ENCODE measurements at regions of chr3 and their contacts with region 1.

Region 1: GRCh38 chr3:100210772-100211135 is 50.0 kb upstream of the TBC1D23 start:
- DNase-seq: no peak
- H3K4me3 Mint-ChIP-seq: no peak overlapping the region
- H3K27ac Mint-ChIP-seq: no peak overlapping the region
- H3K4me1 Mint-ChIP-seq: peaks cover 15% of the 10 kb centered on the region
- H3K27me3 Mint-ChIP-seq: no peaks in the 10 kb centered on the region

Region 2: DNA sequence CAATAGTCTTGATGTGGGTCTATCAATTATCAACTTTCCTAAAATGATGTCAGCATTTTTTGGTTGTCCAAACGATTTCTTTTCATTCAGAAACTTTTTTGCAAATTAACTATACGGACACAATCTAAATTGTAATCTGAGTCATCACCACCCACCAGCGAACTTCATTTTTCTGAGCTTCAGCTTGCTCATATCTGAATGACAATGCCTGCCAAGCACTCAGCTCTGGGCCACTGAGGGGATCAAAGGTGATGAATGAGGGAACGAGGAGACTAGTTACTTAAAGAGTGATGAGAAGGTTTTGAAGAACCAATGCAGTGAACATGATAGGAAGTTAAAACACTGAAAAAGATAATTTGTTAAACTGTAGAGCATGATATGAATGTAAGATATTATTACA is 35.2 kb after region 1 on chr3:
- CTCF ChIA-PET with region 1: no interaction called
- POLR2A ChIA-PET with region 1: no interaction called
- intact Hi-C with region 1: loop called (anchors 2 kb)
- DNase-seq: peak; percentile 58
- H3K4me3 Mint-ChIP-seq: no peak overlapping the region
- H3K27ac Mint-ChIP-seq: no peak overlapping the region
- H3K4me1 Mint-ChIP-seq: peaks cover 16% of the 10 kb centered on the region
- H3K27me3 Mint-ChIP-seq: no peaks in the 10 kb centered on the region

Region 3: GRCh38 chr3:100260685-100261484 is 50.1 kb after region 1 on chr3 and contains the start of gene TBC1D23:
- CTCF ChIA-PET with region 1: no interaction called
- POLR2A ChIA-PET with region 1: no interaction called
- intact Hi-C with region 1: no loop called
- DNase-seq: peak; percentile 99
- H3K4me3 Mint-ChIP-seq: peak within 1 kb of the TSS; percentile 92
- H3K27ac Mint-ChIP-seq: peak within 1 kb of the TSS; percentile 85
- H3K4me1 Mint-ChIP-seq: peaks cover 52% of the 10 kb centered on the region
- H3K27me3 Mint-ChIP-seq: no peaks in the 10 kb centered on the region
- total RNA-seq, gene TBC1D23: 17.8 to 22.7 TPM

Region 4: GRCh38 chr3:100316641-100317069 is 105.9 kb after region 1 on chr3:
- CTCF ChIA-PET with region 1: no interaction called
- POLR2A ChIA-PET with region 1: no interaction called
- intact Hi-C with region 1: no loop called
- DNase-seq: peak; percentile 36
- H3K4me3 Mint-ChIP-seq: no peak overlapping the region
- H3K27ac Mint-ChIP-seq: no peak overlapping the region
- H3K4me1 Mint-ChIP-seq: peaks cover 8% of the 10 kb centered on the region
- H3K27me3 Mint-ChIP-seq: no peaks in the 10 kb centered on the region